ENCODE measurements at regions of chr19 and their contacts with region 1.

Region 1: GRCh38 chr19:48391107-48391986 is at the start of gene KDELR1:
- DNase-seq: peak in 1 of 2 experiments; percentile 82
- H3K4me3 ChIP-seq: peak within 1 kb of the TSS; percentile 91
- H3K27ac ChIP-seq: peak within 1 kb of the TSS; percentile 58
- H3K4me1 ChIP-seq: no peaks in the 10 kb centered on the region
- H3K27me3 ChIP-seq: peaks cover 11% of the 10 kb centered on the region
- CTCF ChIP-seq: peak; percentile 95
- total RNA-seq, gene KDELR1: 220 and 261 TPM in 2 replicates

Region 2: GRCh38 chr19:47814005-47814328 is 577.4 kb before region 1 on chr19:
- CTCF ChIA-PET with region 1: no interaction called
- POLR2A ChIA-PET with region 1: no interaction called
- intact Hi-C with region 1: no loop called
- DNase-seq: no peak
- H3K4me3 ChIP-seq: no peak overlapping the region
- H3K27ac ChIP-seq: no peak overlapping the region
- H3K4me1 ChIP-seq: no peaks in the 10 kb centered on the region
- H3K27me3 ChIP-seq: peaks cover 20% of the 10 kb centered on the region
- CTCF ChIP-seq: no peak

Region 3: GRCh38 chr19:48363810-48364563 is 27.4 kb before region 1 on chr19 and contains the starts of genes SYNGR4 and TMEM143:
- CTCF ChIA-PET with region 1: interaction called, 4 read pairs
- POLR2A ChIA-PET with region 1: interaction called, 7 read pairs
- intact Hi-C with region 1: loop called (anchors 1 kb)
- DNase-seq: peak; percentile 99 to 100
- H3K4me3 ChIP-seq: peak within 1 kb of the TSS; percentile 72
- H3K27ac ChIP-seq: peak within 1 kb of the TSS; percentile 63
- H3K4me1 ChIP-seq: peaks cover 7% of the 10 kb centered on the region
- H3K27me3 ChIP-seq: no peaks in the 10 kb centered on the region
- CTCF ChIP-seq: no peak
- total RNA-seq, gene SYNGR4: 1.3 and 2.1 TPM in 2 replicates
- total RNA-seq, gene TMEM143: 24.8 and 31.3 TPM in 2 replicates

Region 4: DNA sequence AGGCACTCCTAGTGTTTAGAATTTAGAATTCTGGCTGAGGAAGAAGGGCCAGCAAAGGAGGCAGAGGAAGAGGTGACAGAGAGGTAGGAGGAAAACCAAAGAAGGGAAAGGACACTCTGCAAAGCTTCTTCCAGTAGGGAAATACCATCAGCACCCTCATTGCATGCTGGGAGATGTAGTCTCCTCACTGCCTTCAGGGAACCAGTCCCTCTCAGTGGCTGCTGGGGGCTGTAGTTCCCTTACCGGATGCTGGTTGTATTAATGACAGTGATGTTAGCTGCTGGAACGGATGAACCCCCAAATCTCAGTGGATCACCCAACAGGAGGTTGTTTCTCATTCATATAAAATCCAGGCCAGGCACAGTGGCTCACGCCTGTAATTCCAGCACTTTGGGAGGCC is 12.3 kb after region 1 on chr19:
- CTCF ChIA-PET with region 1: interaction called, 10 read pairs
- POLR2A ChIA-PET with region 1: interaction called, 22 read pairs
- intact Hi-C with region 1: no loop called
- DNase-seq: peak; percentile 35
- H3K4me3 ChIP-seq: no peak overlapping the region
- H3K27ac ChIP-seq: no peak overlapping the region
- H3K4me1 ChIP-seq: peaks cover 19% of the 10 kb centered on the region
- H3K27me3 ChIP-seq: no peaks in the 10 kb centered on the region
- CTCF ChIP-seq: no peak

Region 5: DNA sequence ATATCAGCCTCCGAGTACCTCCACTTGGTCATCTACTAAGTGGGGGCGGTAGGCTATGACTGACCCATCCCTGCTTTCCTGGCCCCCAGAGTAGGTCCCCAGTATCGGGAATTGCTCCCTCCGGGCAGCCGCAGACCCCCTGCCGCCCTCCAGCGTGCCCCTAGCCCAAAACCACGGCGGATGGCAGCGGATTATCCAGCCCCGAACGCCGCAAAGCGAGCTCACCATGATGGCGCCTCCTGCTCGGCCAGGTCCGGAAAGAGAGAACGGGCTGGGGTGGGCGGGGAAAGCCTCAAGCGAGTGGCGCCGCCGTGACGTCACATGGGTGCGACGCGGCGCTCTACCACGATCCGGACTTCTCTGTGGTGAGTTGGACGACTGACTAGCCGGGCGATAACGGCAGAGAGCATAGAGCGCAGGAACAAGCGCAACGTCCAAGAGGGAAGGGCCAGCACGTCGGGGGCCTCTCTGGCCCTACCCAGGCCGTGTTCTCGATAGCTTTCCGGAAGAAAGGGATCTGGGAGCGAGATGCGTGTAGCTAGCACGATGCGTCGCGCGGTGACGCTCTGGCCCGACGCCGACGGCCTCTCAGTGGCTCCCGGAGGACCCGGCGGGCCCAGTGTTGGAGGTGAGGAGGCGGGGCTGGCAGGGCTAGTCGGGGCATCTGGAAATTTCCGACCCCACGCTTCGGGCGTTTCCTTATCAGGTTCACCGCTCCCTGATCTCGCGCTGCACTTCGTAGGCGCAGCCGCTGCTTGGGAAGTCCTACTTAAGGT is 227.8 kb after region 1 on chr19 and contains the starts of genes RPL18 and SPHK2:
- CTCF ChIA-PET with region 1: no interaction called
- POLR2A ChIA-PET with region 1: no interaction called
- intact Hi-C with region 1: no loop called
- DNase-seq: peak; percentile 97 to 99
- H3K4me3 ChIP-seq: peak within 1 kb of the TSS; percentile 92
- H3K27ac ChIP-seq: peak within 1 kb of the TSS; percentile 91
- H3K4me1 ChIP-seq: peaks cover 42% of the 10 kb centered on the region
- H3K27me3 ChIP-seq: no peaks in the 10 kb centered on the region
- CTCF ChIP-seq: no peak
- total RNA-seq, gene RPL18: 1,618 and 1,710 TPM in 2 replicates
- total RNA-seq, gene SPHK2: 18.4 and 20.0 TPM in 2 replicates